ENCODE measurements at regions of chr5 and their contacts with region 1.

Region 1: GRCh38 chr5:21452449-21452848 is 1400.7 kb downstream of the CDH12 start:
- DNase-seq: no peak
- H3K4me3 ChIP-seq: no peak overlapping the region
- H3K27ac ChIP-seq: no peak overlapping the region
- H3K4me1 ChIP-seq: no peaks in the 10 kb centered on the region
- H3K27me3 ChIP-seq: no peaks in the 10 kb centered on the region
- CTCF ChIP-seq: no peak
- EP300 ChIP-seq: no peak
- POLR2A ChIP-seq: no peak

Region 2: GRCh38 chr5:21181609-21182125 is 270.8 kb before region 1 on chr5:
- in situ Hi-C with region 1: no loop called
- intact Hi-C with region 1: no loop called
- DNase-seq: no peak
- H3K4me3 ChIP-seq: no peak overlapping the region
- H3K27ac ChIP-seq: no peak overlapping the region
- H3K4me1 ChIP-seq: no peaks in the 10 kb centered on the region
- H3K27me3 ChIP-seq: no peaks in the 10 kb centered on the region
- CTCF ChIP-seq: no peak
- EP300 ChIP-seq: no peak
- POLR2A ChIP-seq: no peak

Region 3: GRCh38 chr5:21791304-21791703 is 338.9 kb after region 1 on chr5:
- in situ Hi-C with region 1: loop called in 1 of 4 experiments (anchors 10 kb)
- intact Hi-C with region 1: no loop called
- DNase-seq: no peak
- H3K4me3 ChIP-seq: no peak overlapping the region
- H3K27ac ChIP-seq: no peak overlapping the region
- H3K4me1 ChIP-seq: no peaks in the 10 kb centered on the region
- H3K27me3 ChIP-seq: no peaks in the 10 kb centered on the region
- CTCF ChIP-seq: no peak
- EP300 ChIP-seq: no peak
- POLR2A ChIP-seq: no peak